HCT116 (cell line): ENCODE measurements at regions of chr6 and their contacts with region 1.

Region 1: DNA sequence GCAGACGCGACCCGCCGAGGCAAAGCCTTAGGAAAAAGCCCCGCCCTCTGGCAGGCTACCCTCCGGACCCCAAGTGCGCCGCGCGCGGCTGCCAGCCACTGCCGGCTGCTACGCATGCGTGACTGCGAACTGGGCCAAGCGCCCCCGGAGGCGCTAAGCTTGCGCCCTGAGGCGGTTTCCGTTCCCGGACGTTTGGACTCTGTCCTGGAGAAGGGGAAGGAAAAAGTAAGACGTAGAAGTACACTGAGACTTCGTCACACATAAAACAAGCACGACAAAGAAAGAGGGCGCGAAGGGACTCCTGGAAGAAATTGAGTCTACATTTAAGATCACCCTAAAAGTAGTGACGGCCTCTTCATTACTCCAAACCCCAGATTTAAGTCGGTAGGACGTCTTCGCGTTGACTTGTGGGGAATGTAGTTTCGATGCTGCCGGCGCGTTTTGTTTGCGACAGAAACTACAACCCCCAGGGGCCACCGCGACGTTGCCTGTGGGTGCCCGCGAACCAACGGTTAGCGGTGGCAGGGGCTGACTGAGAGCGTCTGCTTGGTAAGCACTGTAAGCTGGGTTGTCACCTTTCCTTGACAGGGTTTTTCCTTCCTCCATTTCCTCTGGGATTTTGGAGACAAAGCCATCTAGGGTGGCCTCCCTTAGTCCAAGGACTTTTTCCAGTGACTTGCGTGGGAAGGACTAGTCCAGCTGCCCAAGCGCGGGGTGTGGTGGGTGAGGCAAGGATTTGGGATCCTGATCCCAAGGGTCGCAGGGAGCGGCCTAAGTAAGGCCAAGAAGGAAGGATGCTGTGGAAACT is at the start of gene CEP57L1:
- DNase-seq: peak; percentile 94
- ATAC-seq: peak; percentile 70
- H3K4me3 ChIP-seq: peak within 1 kb of the TSS; percentile 73 to 87
- H3K27ac ChIP-seq: peak within 1 kb of the TSS; percentile 63
- H3K4me1 ChIP-seq: peaks cover 2 to 19% of the 10 kb centered on the region in 2 experiments; a peak in 3 of 4 replicates
- H3K27me3 ChIP-seq: no peaks in the 10 kb centered on the region
- CTCF ChIP-seq: no peak
- POLR2A ChIP-seq: peak; percentile 73
- RAD21 ChIP-seq: no peak
- total RNA-seq, gene CEP57L1: 20.7 TPM

Region 2: DNA sequence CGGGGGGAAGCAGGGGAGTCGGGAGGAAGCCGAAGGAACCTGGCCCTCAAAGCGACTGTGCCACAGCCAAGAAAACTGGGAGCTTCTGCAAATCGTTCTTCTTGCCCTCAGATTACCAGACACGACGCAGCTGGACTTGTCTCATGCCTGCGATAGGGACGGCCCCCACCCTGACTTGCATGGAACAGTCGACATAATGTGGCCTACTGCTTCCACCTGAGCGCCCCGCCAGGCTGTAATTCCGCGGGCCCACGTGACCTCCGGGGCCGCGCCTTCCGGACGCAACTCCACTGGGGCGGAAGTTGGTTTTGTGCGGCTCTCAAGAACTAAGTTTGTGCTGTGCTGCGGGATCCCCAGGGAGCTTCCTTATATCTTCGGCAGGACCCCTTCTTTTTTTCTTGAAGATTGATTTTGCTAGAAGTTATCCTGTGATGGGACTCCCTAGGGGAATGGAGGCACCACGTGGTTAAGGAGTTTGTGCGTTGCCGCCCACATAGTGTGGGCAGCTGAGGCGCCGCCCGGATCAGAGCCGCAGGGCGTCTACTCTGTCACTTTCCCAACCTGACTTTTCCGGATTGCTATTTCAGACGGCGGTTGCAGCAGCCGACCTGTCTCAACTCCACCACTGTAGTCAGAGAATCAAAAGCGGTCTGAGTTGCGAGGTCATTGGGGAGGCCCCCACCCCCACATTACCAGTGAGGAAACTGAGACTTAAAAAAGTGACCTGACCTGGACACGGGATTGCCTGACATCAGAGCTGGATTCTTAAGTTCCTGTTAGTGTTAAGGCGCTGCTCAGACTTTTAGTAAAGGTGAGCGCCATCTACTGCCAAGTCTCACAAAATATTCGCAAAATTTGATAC is 287.6 kb after region 1 on chr6:
- CTCF ChIA-PET with region 1: interaction called, 3 read pairs
- POLR2A ChIA-PET with region 1: interaction called, 6 read pairs
- RAD21 ChIA-PET with region 1: no interaction called
- intact Hi-C with region 1: loop called (anchors 2 kb)
- DNase-seq: peak; percentile 89
- ATAC-seq: peak; percentile 84
- H3K4me3 ChIP-seq: peak overlapping the region; percentile 75 to 80
- H3K27ac ChIP-seq: peak overlapping the region; percentile 92
- H3K4me1 ChIP-seq: peaks cover 4 to 27% of the 10 kb centered on the region in 2 experiments; a peak in 3 of 4 replicates
- H3K27me3 ChIP-seq: no peaks in the 10 kb centered on the region
- CTCF ChIP-seq: peak; percentile 53 to 79 (median 60); a peak in 5 of 6 replicates
- POLR2A ChIP-seq: peak; percentile 16
- RAD21 ChIP-seq: peak; percentile 87